Thyroid gland (tissue), 4 donors: ENCODE measurements at regions of chr5 and their contacts with region 1.

Region 1: DNA sequence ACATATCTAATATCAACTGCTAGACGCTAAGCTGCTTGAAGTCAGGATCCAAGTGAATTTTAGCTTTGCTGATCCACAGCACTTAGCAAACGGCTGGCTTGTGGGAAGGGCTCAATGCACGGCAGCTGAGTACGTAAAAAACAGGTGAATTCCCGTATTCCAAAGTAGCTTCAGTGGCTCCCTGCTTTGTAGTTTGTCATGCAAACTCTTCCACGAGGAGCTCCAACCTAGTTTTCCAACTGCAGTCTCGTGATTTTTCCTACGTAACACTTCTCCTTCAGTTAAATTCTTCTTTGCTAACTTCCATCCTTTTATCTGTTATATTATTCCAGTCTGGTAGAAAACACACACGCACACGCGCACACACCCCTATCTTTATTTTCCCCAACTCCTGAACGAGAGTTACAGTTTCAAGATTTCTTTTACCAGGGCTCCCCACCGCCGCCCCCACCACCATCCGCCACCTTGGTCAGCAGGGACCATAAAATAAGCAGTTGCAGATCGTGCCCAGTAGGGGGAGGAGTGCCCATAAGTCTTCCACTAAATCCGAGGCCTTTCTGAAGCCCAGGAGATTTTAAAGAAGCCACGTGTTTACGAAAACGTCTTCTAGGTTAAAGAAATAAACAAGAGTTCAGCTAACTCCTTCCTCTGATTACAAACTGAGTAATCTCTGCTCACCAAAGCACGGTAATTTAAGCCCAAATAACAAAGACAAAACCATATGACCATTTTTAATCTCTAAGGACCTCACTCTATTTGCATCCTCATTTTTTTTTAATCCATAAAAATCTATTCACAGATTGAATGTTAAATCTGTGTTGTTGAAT is 34.8 kb upstream of the TRIO start:
- DNase-seq: peak; percentile 56 to 59
- H3K4me3 ChIP-seq: no peak overlapping the region
- H3K27ac ChIP-seq: no peak overlapping the region
- H3K4me1 ChIP-seq: no peaks in the 10 kb centered on the region
- H3K27me3 ChIP-seq: no peaks in the 10 kb centered on the region
- CTCF ChIP-seq: peak in 5 of 6 experiments; percentile 55 to 80 (median 63)
- POLR2A ChIP-seq: no peak

Region 2: DNA sequence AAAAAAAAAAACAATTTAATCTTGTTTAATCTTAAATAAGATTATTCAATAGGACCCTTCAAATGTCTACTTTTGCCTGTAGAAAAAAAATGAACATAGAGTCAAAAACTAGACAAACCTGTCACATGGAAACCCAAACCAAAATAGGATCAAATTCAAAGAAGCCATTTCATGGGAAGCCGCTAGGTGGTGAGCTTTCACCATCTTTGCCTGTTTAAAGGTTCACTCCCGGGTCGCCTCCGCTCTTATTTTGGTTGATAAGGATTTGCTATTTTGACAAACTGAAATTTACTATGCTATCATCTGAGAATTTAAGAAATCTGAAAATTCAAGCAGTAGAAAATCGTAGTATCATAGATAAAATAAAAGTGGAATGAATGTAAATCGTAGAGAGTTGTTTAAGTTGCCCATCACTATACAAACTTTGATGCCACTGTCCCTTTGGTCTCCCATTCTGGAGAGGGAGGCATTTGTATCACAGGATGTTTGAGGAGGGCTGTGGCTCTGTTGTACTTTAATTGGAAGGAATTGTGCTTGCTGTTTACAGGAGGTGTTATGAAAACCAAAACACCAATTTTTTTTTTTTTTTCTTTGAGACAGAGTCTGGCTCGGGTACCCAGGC is 120.4 kb before region 1 on chr5:
- intact Hi-C with region 1: loop called (anchors 10 kb)
- DNase-seq: peak; percentile 52 to 58
- H3K4me3 ChIP-seq: no peak overlapping the region
- H3K27ac ChIP-seq: no peak overlapping the region
- H3K4me1 ChIP-seq: no peaks in the 10 kb centered on the region
- H3K27me3 ChIP-seq: no peaks in the 10 kb centered on the region
- CTCF ChIP-seq: peak; percentile 36 to 92 (median 79)
- POLR2A ChIP-seq: no peak

Region 3: GRCh38 chr5:14168144-14168792 is 59.9 kb after region 1 on chr5:
- intact Hi-C with region 1: no loop called
- DNase-seq: no peak
- H3K4me3 ChIP-seq: no peak overlapping the region
- H3K27ac ChIP-seq: peak overlapping the region in 2 of 3 donors; percentile 45 to 60
- H3K4me1 ChIP-seq: peaks cover 15 to 39% of the 10 kb centered on the region in 2 donors
- H3K27me3 ChIP-seq: no peaks in the 10 kb centered on the region
- CTCF ChIP-seq: no peak
- POLR2A ChIP-seq: no peak